Posterior vena cava (tissue), 2 donors: ENCODE measurements at regions of chr15 and their contacts with region 1.

Region 1: DNA sequence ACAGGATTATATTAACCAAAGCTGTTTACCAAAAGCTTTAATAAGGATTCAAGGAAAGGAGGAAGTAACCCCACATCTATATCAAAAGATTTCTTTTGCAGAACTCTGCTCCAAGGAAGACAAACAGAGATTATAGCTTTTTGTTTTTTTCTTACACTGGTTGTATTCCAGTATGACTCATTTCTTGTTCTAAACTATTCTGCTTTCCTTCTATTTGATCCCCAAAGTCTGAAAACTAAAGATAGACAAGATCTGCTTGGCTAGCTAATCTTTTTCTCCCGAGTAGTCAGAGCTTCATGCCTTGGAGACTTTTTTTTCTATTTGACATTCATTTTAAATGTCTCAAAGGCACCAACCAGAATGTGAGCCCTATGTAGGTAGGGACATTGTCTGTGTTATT is 36.8 kb upstream of the FRMD5 start:
- DNase-seq: no peak

Region 2: GRCh38 chr15:43881944-43882343 is 349.9 kb before region 1 on chr15:
- intact Hi-C with region 1: loop called in 1 of 2 experiments (anchors 10 kb)
- DNase-seq: no peak

Region 3: DNA sequence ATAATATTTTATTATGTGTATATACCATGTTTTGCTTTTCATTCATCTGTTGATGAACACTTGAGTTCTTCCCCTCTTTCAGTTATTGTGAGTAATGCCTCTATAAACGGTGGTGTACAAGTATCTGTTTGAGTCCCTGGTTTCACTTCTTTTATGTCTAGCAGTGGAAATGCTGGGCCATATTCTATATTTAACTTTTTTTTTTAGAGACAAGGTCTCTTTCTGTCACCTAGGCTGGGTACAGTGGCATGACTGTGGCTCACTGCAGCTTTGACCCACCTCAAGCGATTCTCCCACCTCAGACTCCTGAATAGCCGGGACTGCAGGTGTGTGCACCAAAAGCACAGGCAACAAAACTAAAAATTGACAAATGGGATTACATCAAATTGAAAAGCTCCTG is 76.6 kb after region 1 on chr15:
- intact Hi-C with region 1: no loop called
- DNase-seq: no peak

Region 4: DNA sequence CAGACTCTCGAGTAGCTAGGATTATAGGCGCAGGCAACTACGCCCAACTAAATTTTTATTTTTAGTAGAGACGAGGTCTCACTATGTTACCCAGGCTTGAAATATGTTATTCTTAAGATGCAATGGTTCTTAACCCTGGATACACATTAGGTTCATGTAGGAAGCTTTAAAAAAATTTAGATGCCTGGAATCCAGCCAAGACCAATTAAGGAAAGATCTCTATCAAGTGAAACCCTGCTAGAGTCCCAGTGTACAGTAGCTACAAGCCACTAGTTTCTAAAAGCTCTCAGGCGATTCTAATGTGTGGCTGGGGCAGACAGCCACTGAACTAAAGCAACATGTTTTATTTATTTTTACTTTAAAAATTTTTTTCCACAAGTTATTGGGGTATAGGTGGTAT is 537.7 kb after region 1 on chr15:
- intact Hi-C with region 1: no loop called
- DNase-seq: no peak

Region 5: GRCh38 chr15:45037936-45038335 is 806.1 kb after region 1 on chr15:
- intact Hi-C with region 1: no loop called
- DNase-seq: no peak